ENCODE measurements at regions of chr12 and their contacts with region 1.

Region 1: GRCh38 chr12:54439521-54440255 is 20.6 kb upstream of the ITGA5 start:
- DNase-seq: peak in 2 of 7 donors; percentile 31 to 37
- H3K4me3 ChIP-seq: no peak overlapping the region
- H3K27ac ChIP-seq: no peak overlapping the region
- H3K4me1 ChIP-seq: peaks cover 0 to 5% of the 10 kb centered on the region in 2 donors
- H3K27me3 ChIP-seq: peaks cover 4% of the 10 kb centered on the region
- CTCF ChIP-seq: peak; percentile 70 to 94 (median 90)
- POLR2A ChIP-seq: no peak

Region 2: GRCh38 chr12:54398995-54399793 is 40.5 kb before region 1 on chr12:
- intact Hi-C with region 1: loop called (anchors 2 to 5 kb)
- DNase-seq: peak; percentile 81 to 97 (median 90)
- H3K4me3 ChIP-seq: no peak overlapping the region
- H3K27ac ChIP-seq: no peak overlapping the region
- H3K4me1 ChIP-seq: no peaks in the 10 kb centered on the region
- H3K27me3 ChIP-seq: no peaks in the 10 kb centered on the region
- CTCF ChIP-seq: peak; percentile 97 to 99 (median 98)
- POLR2A ChIP-seq: no peak

Region 3: GRCh38 chr12:54404061-54405004 is 35.4 kb before region 1 on chr12:
- intact Hi-C with region 1: loop called (anchors 2 to 5 kb)
- DNase-seq: peak in 4 of 7 donors; percentile 68 to 81 (median 76)
- H3K4me3 ChIP-seq: no peak overlapping the region
- H3K27ac ChIP-seq: peak overlapping the region in 2 of 5 donors; percentile 6 to 27
- H3K4me1 ChIP-seq: no peaks in the 10 kb centered on the region
- H3K27me3 ChIP-seq: no peaks in the 10 kb centered on the region
- CTCF ChIP-seq: peak; percentile 83 to 97 (median 89)
- POLR2A ChIP-seq: no peak

Measured in adrenal gland (tissue), 19 donors.